ENCODE measurements at regions of chr2 and their contacts with region 1.

Region 1: DNA sequence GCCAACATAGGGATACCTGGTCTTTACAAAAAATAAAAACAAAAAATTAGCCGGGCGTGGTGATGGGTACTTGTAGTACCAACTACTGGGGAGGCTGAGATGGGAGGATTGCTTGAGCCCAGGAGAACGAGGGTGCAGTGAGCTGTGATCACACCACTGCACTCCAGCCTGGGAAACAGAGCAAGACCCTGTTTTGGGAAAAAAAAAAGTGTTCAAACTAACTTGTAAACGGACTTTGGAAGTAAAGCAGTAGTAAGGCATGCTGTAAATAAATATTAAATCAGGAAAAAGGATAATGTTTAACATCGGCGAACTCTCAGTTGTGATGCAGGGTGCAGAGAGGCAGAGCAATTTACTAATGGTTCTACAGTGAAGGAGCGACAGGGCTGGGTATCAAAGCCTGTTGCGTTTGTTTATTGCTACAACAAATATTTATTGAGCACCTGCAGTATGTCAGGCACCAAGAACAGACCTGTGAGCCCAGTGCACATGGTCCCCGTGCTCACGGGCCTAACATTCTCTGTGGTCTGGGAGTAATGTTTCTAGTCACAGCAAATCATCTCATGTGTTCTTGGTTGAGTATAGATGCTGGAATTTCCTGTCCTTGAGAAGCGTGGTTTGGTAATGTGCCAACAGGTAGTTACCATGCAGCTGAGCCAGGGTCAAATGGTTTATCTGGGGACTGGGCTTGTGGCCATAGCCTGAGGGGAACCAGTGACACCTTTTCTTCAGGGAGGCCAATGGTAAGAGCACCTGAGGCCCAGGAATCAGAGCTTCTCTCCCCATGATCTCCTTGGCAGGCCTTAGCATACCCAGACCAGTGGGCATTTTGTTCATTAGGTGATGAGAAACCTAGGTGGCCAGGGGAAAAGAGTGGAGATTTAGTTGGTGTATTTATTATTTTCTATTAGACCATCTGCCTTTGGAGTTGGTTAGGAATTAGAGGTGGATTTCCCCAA is 27.9 kb upstream of the GREB1 start:
- DNase-seq: no peak
- ATAC-seq: no peak
- H3K4me3 ChIP-seq: no peak overlapping the region
- H3K27ac ChIP-seq: no peak overlapping the region
- H3K4me1 ChIP-seq: no peaks in the 10 kb centered on the region; the same call in 1 of the 2 replicates
- H3K27me3 ChIP-seq: peaks cover 15% of the 10 kb centered on the region
- CTCF ChIP-seq: no peak
- POLR2A ChIP-seq: no peak
- RAD21 ChIP-seq: no peak

Region 2: GRCh38 chr2:11589316-11589940 is 83.5 kb after region 1 on chr2:
- CTCF ChIA-PET with region 1: no interaction called
- POLR2A ChIA-PET with region 1: interaction called, 14 read pairs
- dilution Hi-C with region 1: no loop called
- in situ Hi-C with region 1: no loop called
- intact Hi-C with region 1: no loop called
- DNase-seq: no peak
- ATAC-seq: no peak
- H3K4me3 ChIP-seq: no peak overlapping the region
- H3K27ac ChIP-seq: no peak overlapping the region
- H3K4me1 ChIP-seq: no peaks in the 10 kb centered on the region
- H3K27me3 ChIP-seq: peaks cover 40% of the 10 kb centered on the region
- CTCF ChIP-seq: no peak
- POLR2A ChIP-seq: no peak
- RAD21 ChIP-seq: no peak

Region 3: GRCh38 chr2:12579018-12579417 is 1073.1 kb after region 1 on chr2:
- CTCF ChIA-PET with region 1: no interaction called
- POLR2A ChIA-PET with region 1: no interaction called
- dilution Hi-C with region 1: no loop called
- in situ Hi-C with region 1: no loop called
- intact Hi-C with region 1: loop called (anchors 10 kb)
- DNase-seq: no peak
- ATAC-seq: no peak
- H3K4me3 ChIP-seq: no peak overlapping the region
- H3K27ac ChIP-seq: no peak overlapping the region
- H3K4me1 ChIP-seq: no peaks in the 10 kb centered on the region
- H3K27me3 ChIP-seq: no peaks in the 10 kb centered on the region
- CTCF ChIP-seq: no peak
- POLR2A ChIP-seq: no peak
- RAD21 ChIP-seq: no peak